GM10248 (cell line): ENCODE measurements at regions of chr11 and their contacts with region 1.

Region 1: GRCh38 chr11:47259178-47259977 is 1.6 kb downstream of the NR1H3 start:
- DNase-seq: peak; percentile 72
- CTCF ChIP-seq: peak; percentile 59

Region 2: GRCh38 chr11:47186076-47186936 is 73.1 kb before region 1 on chr11 and contains the start of gene PACSIN3:
- CTCF ChIA-PET with region 1: interaction called, 66 read pairs
- POLR2A ChIA-PET with region 1: no interaction called
- DNase-seq: peak; percentile 75
- CTCF ChIP-seq: no peak

Region 3: DNA sequence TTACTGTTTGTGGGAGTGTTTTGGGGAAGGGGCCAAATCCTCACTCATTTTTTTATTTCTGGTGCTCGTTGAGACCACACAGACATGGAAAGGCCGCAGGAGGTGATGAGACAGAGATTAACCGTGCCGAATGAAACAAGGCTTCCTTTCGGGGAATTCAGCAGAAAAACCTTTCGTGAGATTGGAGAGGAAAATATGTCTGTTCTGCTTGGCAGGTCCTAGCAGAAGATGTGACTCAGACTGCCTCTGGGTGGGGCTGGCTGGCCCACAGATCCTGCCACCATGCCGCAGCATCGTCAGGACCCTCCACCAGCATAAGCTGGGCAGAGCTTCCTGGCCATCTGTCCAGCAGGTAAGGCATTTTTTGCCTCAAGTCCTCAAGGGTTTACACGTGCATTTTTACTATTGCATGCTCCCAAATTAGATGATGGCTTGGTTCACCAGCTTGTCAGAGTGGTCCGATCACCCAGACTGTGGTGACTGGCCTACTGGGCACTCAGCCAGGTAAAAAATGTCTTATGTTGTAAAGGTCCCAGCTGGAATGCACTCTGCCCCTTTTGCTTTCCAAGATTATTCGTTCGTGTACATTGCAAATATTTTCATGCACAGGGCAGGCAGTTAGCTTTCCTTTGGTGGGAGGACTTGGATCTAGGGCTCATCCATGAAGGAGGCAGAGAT is 43.1 kb before region 1 on chr11:
- CTCF ChIA-PET with region 1: interaction called, 18 read pairs
- POLR2A ChIA-PET with region 1: no interaction called
- DNase-seq: peak; percentile 61
- CTCF ChIP-seq: peak; percentile 39

Region 4: GRCh38 chr11:47233989-47234668 is 25.2 kb before region 1 on chr11:
- CTCF ChIA-PET with region 1: interaction called, 28 read pairs
- POLR2A ChIA-PET with region 1: no interaction called
- DNase-seq: no peak
- CTCF ChIP-seq: no peak

Region 5: GRCh38 chr11:47241841-47242301 is 17.5 kb before region 1 on chr11:
- CTCF ChIA-PET with region 1: interaction called, 57 read pairs
- POLR2A ChIA-PET with region 1: no interaction called
- DNase-seq: no peak
- CTCF ChIP-seq: no peak

Region 6: GRCh38 chr11:47248664-47249377 is 10.6 kb before region 1 on chr11 and contains the start of gene ACP2:
- CTCF ChIA-PET with region 1: interaction called, 57 read pairs
- POLR2A ChIA-PET with region 1: no interaction called
- DNase-seq: peak; percentile 88
- CTCF ChIP-seq: peak; percentile 58

Region 7: GRCh38 chr11:47407746-47408590 is 148.6 kb after region 1 on chr11 and contains the start of gene SLC39A13:
- CTCF ChIA-PET with region 1: interaction called, 14 read pairs
- POLR2A ChIA-PET with region 1: interaction called, 3 read pairs
- DNase-seq: peak; percentile 97
- CTCF ChIP-seq: peak; percentile 98